ENCODE measurements at regions of chr20 and their contacts with region 1.

Region 1: DNA sequence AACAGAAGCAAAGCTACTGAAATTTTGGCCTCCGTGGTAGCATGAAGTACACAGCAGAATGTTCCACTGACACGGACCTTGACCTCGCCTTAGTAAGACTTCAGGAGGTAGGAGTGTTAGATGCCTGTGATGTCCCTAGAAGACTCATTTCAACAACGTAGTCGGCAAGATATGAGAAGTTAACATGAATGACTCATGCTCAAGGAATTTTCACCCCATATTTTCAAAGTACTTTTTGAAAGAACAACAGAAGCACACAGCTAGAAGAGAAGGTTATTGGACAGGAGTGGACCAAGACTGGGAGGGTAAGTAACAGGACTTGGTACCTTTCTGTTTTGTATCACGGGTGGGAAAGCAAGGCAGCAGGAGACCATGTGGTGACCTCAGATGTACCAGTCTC is 78.0 kb downstream of the DZANK1 start:
- DNase-seq: no peak
- H3K4me3 ChIP-seq: no peak overlapping the region
- H3K27ac ChIP-seq: no peak overlapping the region
- H3K4me1 ChIP-seq: no peaks in the 10 kb centered on the region
- H3K27me3 ChIP-seq: no peaks in the 10 kb centered on the region
- CTCF ChIP-seq: no peak
- EP300 ChIP-seq: no peak
- POLR2A ChIP-seq: no peak
- RAD21 ChIP-seq: no peak

Region 2: DNA sequence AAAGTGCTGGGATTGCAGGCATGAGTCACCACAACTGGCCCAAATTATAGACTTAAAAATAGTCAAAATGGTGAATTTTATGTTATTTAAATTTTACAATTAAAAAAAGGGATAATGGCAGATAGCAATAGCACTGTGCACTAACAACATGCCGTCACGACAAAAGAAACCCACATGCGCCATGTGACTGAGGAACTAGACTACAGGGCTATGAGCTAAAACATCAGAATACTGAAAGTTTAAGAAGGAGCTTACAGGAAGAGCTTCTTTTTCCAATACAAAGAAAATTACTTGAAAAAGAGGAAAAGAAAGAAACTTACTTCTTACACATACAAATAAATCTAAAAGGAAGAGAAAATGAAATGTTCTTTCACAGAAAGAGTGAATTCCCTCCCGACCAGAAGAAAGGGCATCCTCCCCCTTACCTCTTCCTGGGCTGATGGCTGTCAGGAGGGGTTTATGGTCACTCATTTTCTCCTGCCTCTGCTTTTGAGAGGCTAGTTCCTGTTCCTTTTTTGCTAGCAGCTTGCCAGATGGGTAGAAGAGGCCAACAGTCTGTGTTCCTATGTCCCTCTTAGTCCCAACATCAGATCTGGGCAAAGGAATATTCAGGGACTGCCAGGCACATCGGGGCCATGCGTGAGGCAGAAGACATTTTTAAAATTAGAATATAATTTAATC is 23.5 kb after region 1 on chr20:
- CTCF ChIA-PET with region 1: interaction called, 15 read pairs
- POLR2A ChIA-PET with region 1: no interaction called
- DNase-seq: no peak
- H3K4me3 ChIP-seq: peak overlapping the region in 2 of 4 experiments; percentile 5 to 40; a peak in 2 of 8 replicates
- H3K27ac ChIP-seq: no peak overlapping the region; the same call in 1 of the 2 replicates
- H3K4me1 ChIP-seq: peaks cover 0 to 10% (median 2%) of the 10 kb centered on the region in 4 experiments; a peak in 5 of 7 replicates
- H3K27me3 ChIP-seq: no peaks in the 10 kb centered on the region
- CTCF ChIP-seq: no peak
- EP300 ChIP-seq: no peak
- POLR2A ChIP-seq: no peak
- RAD21 ChIP-seq: no peak

Measured in H1 (cell line).